HEK293 (cell line): ENCODE measurements at regions of chr20 and their contacts with region 1.

Region 1: GRCh38 chr20:51182571-51182970 is 159.7 kb upstream of the KCNG1 start:
- H3K4me3 ChIP-seq: no peak overlapping the region
- H3K27ac ChIP-seq: no peak overlapping the region
- H3K4me1 ChIP-seq: no peaks in the 10 kb centered on the region
- CTCF ChIP-seq: no peak

Region 2: DNA sequence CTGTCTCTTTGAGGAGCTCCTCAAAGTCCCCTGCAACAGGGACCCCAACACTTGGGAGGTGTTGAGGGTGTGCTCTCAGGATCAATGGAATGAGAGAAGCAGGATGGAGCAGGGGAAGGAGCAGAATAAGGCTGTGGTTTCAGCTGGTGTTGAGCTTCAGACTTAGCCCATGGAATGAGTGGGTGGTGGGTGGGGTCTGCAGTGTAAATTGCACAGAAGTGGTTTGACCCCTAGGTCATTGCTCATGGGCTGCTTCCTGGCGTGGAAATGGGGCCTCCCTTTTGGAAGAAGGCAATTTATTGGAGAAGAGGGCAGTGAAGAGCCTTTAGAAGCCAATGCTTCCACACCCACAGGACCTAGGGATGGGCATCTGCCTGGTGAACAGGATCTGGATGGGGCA is 122.7 kb before region 1 on chr20:
- CTCF ChIA-PET with region 1: no interaction called
- POLR2A ChIA-PET with region 1: no interaction called
- H3K4me3 ChIP-seq: no peak overlapping the region
- H3K27ac ChIP-seq: no peak overlapping the region
- H3K4me1 ChIP-seq: no peaks in the 10 kb centered on the region
- CTCF ChIP-seq: no peak

Region 3: DNA sequence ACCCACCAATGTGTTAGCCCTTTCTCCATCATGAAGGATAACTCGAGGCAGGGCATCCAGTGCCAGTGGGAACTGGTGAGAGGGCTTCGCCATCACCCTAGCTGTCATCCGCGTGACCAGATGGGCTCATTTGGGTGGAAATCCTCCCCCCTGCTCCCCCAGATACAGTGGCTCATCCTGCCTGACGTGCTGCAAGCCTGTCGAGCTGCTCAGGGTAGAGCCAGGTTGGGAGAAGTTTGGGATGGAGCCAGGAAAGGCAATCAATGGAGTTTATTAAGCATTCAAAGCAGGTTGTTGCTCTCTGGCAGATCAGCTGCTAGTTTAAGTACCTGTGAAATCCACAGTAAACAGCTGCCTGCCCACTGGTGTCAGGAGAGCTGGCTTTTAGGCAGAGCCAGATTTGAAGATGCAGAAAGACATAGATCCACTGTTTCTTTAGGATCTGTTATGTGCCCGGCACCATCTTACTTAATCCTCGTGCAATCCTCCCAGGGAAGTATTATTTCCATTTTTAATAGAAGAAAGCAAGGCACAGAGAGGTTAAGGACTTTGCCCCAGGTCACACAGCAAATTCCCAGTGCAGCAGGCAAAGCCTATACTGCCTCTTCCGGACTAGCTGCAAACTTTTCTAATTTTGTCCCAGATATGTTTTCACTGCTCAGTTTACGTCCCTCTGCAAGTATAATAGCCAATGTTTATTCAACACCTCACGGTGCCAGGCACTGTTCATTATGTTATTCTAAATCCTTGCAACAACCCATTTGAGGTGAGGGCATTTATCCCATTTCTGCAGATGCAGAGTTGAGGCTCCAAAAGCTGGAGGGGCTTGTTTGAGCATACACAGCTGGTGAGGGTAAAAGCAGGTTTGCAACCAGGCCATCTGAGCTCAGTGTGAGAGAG is 105.5 kb before region 1 on chr20:
- CTCF ChIA-PET with region 1: no interaction called
- POLR2A ChIA-PET with region 1: no interaction called
- H3K4me3 ChIP-seq: no peak overlapping the region
- H3K27ac ChIP-seq: no peak overlapping the region
- H3K4me1 ChIP-seq: no peaks in the 10 kb centered on the region
- CTCF ChIP-seq: no peak

Region 4: DNA sequence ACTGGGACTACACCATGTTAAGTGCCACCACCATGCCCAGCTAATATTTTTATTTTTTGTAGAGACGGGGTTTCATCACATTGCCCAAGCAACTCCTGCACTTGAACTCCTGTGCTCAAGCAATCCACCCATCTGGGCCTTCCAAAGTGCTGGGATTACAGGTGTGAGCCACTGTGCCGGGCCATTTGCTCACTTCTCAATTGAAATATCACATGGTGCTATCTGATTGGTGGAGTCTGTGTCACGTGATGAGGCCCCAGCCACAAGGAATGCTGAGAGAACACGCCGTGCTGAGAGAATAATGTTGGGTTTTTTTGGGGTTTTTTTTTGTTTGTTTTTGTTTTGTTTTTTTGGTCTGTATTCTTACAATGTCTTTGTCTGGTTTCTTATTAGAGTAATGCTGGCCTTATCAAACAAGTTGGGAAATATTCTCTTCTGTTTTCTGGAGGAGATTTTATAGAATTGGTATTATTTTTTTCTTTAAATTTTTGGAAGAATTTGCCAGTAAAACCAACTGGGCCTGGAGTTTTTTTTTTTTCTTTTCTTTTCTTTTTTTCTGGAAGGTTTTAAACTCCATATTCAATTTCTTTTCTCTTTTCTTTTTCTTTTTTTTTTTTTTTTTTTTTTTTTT is 23.6 kb after region 1 on chr20:
- CTCF ChIA-PET with region 1: no interaction called
- POLR2A ChIA-PET with region 1: interaction called, 10 read pairs
- H3K4me3 ChIP-seq: no peak overlapping the region
- H3K27ac ChIP-seq: no peak overlapping the region
- H3K4me1 ChIP-seq: no peaks in the 10 kb centered on the region
- CTCF ChIP-seq: no peak